ENCODE measurements at regions of chr3 and their contacts with region 1.

Region 1: DNA sequence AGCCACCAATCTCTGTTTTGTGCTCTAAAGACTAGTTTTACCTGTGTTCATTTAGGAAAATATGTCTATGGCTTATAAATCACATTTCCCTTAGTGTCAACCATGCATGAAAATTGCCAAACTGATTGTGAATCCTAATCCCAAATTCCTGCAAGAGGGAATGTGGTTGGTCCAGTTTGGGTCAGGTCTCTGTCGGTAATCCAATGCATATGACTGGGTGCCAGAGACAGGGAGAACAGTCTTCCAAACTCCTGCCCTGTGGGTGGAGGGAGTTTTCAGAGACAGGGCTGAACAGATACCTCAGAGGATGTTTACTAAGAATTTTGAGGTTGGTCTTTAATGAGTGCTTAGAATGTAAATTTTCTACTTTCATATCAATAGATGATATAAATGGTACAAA is 300.5 kb upstream of the ARL6 start:
- DNase-seq: no peak
- ATAC-seq: no peak
- H3K4me3 ChIP-seq: no peak overlapping the region
- H3K27ac ChIP-seq: no peak overlapping the region
- H3K4me1 ChIP-seq: no peaks in the 10 kb centered on the region
- H3K27me3 ChIP-seq: no peaks in the 10 kb centered on the region
- CTCF ChIP-seq: no peak

Region 2: DNA sequence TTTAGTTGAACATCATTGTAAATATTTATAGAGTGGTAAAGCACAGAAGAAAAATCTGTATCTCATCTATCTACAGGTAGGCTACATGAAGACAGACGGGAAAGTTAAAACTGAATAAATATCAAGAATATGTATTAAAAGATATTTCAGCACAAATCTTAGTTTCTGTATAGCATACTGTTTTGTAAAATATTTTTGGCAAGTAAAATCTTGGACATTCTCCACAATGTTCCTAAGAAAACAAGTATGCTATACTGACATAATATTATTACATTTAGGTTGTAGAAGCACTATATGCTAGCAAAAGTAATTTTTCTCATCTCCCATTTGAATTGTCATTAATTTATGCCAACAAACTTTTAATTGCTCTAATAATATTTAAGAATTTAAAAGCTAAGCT is 25.9 kb before region 1 on chr3:
- CTCF ChIA-PET with region 1: no interaction called
- POLR2A ChIA-PET with region 1: no interaction called
- in situ Hi-C with region 1: no loop called
- intact Hi-C with region 1: loop called (anchors 2 kb)
- DNase-seq: no peak
- ATAC-seq: no peak
- H3K4me3 ChIP-seq: no peak overlapping the region
- H3K27ac ChIP-seq: no peak overlapping the region
- H3K4me1 ChIP-seq: no peaks in the 10 kb centered on the region
- H3K27me3 ChIP-seq: no peaks in the 10 kb centered on the region
- CTCF ChIP-seq: no peak

Measured in Panc1 (cell line).